IMR-90 (cell line): ENCODE measurements at regions of chr7 and their contacts with region 1.

Region 1: GRCh38 chr7:77542409-77542808 is 5.3 kb downstream of the PTPN12 start:
- DNase-seq: peak; percentile 53
- ATAC-seq: no peak
- H3K4me3 ChIP-seq: no peak overlapping the region
- H3K27ac ChIP-seq: no peak overlapping the region; the same call in 1 of the 2 replicates
- H3K4me1 ChIP-seq: peaks cover 17% of the 10 kb centered on the region
- H3K27me3 ChIP-seq: no peaks in the 10 kb centered on the region
- CTCF ChIP-seq: no peak
- POLR2A ChIP-seq: no peak
- RAD21 ChIP-seq: no peak

Region 2: GRCh38 chr7:76359111-76359978 is 1183.1 kb before region 1 on chr7:
- CTCF ChIA-PET with region 1: no interaction called
- POLR2A ChIA-PET with region 1: interaction called, 10 read pairs
- dilution Hi-C with region 1: no loop called
- in situ Hi-C with region 1: no loop called
- intact Hi-C with region 1: no loop called
- DNase-seq: peak; percentile 99
- ATAC-seq: peak; percentile 93
- H3K4me3 ChIP-seq: peak overlapping the region; percentile 98
- H3K27ac ChIP-seq: peak overlapping the region; percentile 99
- H3K4me1 ChIP-seq: peaks cover 12% of the 10 kb centered on the region
- H3K27me3 ChIP-seq: no peaks in the 10 kb centered on the region
- CTCF ChIP-seq: peak; percentile 94
- POLR2A ChIP-seq: peak; percentile 39
- RAD21 ChIP-seq: peak; percentile 66

Region 3: DNA sequence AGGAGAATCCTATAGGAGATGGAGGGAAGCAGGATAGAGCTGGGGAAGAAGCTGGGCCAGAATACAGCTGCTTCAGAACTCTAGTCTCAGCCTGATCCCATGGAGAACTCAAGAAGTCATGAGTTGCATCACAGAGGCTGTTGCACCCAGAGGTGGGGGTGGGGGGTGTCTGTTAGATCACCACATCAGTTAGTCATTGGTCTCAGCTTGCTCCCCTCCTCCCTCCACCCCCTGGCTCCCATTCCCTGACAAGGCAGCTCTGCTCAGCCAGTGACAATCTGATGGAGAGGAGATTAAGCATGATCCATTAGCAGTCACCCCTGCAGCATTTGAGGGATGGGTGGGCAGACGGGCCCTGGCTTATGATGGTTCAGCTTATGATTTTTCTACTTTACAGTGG is 284.4 kb before region 1 on chr7:
- CTCF ChIA-PET with region 1: no interaction called
- POLR2A ChIA-PET with region 1: no interaction called
- dilution Hi-C with region 1: no loop called
- in situ Hi-C with region 1: no loop called
- intact Hi-C with region 1: loop called (anchors 10 kb)
- DNase-seq: peak; percentile 78
- ATAC-seq: peak; percentile 55
- H3K4me3 ChIP-seq: no peak overlapping the region
- H3K27ac ChIP-seq: peak overlapping the region; percentile 10; the same call in 1 of the 2 replicates
- H3K4me1 ChIP-seq: peaks cover 23% of the 10 kb centered on the region
- H3K27me3 ChIP-seq: no peaks in the 10 kb centered on the region
- CTCF ChIP-seq: no peak
- POLR2A ChIP-seq: no peak
- RAD21 ChIP-seq: no peak

Region 4: GRCh38 chr7:77338883-77339629 is 203.4 kb before region 1 on chr7:
- CTCF ChIA-PET with region 1: no interaction called
- POLR2A ChIA-PET with region 1: no interaction called
- dilution Hi-C with region 1: no loop called
- in situ Hi-C with region 1: no loop called
- intact Hi-C with region 1: loop called (anchors 5 kb)
- DNase-seq: peak; percentile 45
- ATAC-seq: no peak; the same call in 1 of the 2 replicates
- H3K4me3 ChIP-seq: no peak overlapping the region
- H3K27ac ChIP-seq: no peak overlapping the region
- H3K4me1 ChIP-seq: peaks cover 3% of the 10 kb centered on the region
- H3K27me3 ChIP-seq: no peaks in the 10 kb centered on the region
- CTCF ChIP-seq: no peak
- POLR2A ChIP-seq: no peak
- RAD21 ChIP-seq: no peak

Region 5: GRCh38 chr7:77727936-77728701 is 185.7 kb after region 1 on chr7:
- CTCF ChIA-PET with region 1: no interaction called
- POLR2A ChIA-PET with region 1: no interaction called
- dilution Hi-C with region 1: no loop called
- in situ Hi-C with region 1: no loop called
- intact Hi-C with region 1: no loop called
- DNase-seq: peak; percentile 55
- ATAC-seq: peak; percentile 75
- H3K4me3 ChIP-seq: no peak overlapping the region
- H3K27ac ChIP-seq: peak overlapping the region; percentile 13; the same call in 1 of the 2 replicates
- H3K4me1 ChIP-seq: peaks cover 10% of the 10 kb centered on the region
- H3K27me3 ChIP-seq: no peaks in the 10 kb centered on the region
- CTCF ChIP-seq: no peak
- POLR2A ChIP-seq: no peak
- RAD21 ChIP-seq: no peak